Cardiac septum (tissue), 1 donor: ENCODE measurements at regions of chr4 and their contacts with region 1.

Region 1: GRCh38 chr4:123872118-123872517 is 475.5 kb downstream of the SPRY1 start:
- DNase-seq: no peak

Region 2: DNA sequence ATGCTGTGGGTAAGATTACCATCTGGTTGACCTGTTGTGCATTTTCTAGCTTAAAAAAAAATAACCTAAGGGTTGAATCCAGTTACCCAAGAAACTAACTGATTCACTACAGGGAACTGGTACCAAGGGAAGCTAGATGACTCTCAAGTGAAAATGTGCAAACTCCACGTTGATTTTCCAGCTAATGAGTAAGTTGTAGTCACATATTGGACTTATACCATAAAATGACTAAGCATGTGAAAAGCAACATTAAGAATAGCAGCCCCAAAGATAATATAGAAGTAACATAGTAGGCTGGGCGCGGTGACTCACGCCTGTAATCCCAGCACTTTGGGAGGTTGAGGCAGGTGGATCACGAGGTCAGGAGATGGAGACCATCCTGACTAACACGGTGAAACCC is 204.6 kb before region 1 on chr4:
- intact Hi-C with region 1: no loop called
- DNase-seq: no peak

Region 3: GRCh38 chr4:123832173-123833026 is 39.7 kb before region 1 on chr4:
- intact Hi-C with region 1: loop called (anchors 1 kb)
- DNase-seq: peak; percentile 81